Activated CD4-positive, alpha-beta T cell treated with anti-CD3 and anti-CD28 coated beads, Interleukin-2, amount 10 ng/mL, durations not matched to agents 24 days and 14 days (primary cell): ENCODE measurements at regions of chrX and their contacts with region 1.

Region 1: DNA sequence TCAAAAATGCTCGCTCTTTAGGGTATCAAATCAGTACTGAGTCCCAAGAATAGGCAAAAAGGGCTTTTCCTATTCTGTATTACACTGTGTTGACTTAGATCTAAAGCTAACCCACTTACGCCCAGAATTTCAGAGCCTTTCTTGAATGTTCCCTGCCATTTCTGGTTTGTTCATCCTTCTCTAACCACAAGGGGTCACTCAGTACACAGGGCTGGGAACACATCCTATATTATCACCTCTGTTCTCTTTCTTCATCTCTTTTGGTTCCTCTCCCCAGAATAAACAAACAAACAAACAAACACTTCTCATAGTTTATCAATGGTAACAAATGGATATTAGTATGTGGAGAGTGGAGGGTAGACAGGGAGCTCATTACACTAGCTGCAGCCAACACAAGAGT is 25.5 kb upstream of the MORC4 start:
- DNase-seq: peak; percentile 58
- H3K4me3 Mint-ChIP-seq: no peak overlapping the region
- H3K27ac Mint-ChIP-seq: no peak overlapping the region
- H3K4me1 Mint-ChIP-seq: no peaks in the 10 kb centered on the region
- H3K27me3 Mint-ChIP-seq: peaks cover 5% of the 10 kb centered on the region

Region 2: DNA sequence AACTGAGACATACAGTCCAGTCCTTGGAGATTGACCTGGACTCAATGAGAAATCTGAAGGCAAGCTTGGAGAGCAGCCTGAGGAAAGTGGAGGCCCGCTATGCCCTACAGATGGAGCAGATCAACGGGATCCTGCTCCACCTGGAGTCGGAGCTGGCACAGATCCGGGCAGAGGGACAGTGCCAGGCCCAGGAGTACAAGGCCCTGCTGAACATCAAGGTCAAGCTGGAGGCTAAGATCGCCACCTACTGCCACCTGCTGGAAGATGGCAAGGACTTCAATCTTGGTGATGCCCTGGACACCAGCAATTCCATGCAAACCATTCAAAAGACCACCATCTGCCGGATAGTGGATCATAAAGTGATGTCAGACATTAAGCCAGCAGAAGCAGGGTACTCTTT is 403.5 kb after region 1 on chrX:
- intact Hi-C with region 1: loop called (anchors 2 kb)
- DNase-seq: peak; percentile 70
- H3K4me3 Mint-ChIP-seq: no peak overlapping the region
- H3K27ac Mint-ChIP-seq: no peak overlapping the region
- H3K4me1 Mint-ChIP-seq: no peaks in the 10 kb centered on the region
- H3K27me3 Mint-ChIP-seq: peaks cover 7% of the 10 kb centered on the region